ENCODE measurements at regions of chr5 and their contacts with region 1.

Region 1: DNA sequence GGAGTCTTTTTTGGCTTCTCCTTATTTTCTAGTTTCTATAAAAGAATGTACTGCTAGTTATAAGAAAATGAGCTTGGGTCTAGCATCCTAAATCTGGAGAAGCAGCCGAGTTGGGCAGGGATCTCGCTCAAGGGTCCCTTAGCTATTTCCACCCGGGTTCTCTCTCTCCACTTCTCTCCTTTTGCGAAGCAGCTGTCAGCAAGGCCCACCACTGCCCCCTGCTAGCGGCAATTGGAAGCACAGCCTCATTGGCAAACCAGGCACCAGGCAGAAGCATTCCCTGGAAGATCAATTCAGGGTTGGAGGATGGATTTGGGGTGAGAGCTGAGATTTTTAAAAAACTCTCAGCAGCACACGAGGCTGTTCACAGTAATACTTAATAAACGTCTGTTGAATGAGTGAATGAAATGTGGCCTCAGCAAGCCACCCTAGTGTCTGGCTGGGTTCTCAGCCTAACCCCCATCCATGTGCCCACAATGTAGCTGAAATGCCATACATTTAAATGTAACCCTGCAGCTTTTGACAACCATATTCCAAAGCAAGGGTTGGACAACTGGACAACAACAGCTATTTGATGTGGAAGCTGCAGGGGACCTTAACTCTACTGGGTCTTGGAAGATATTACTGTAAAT is 34.6 kb upstream of the TNIP1 start:
- DNase-seq: peak; percentile 78
- H3K4me3 Mint-ChIP-seq: no peak overlapping the region
- H3K27ac Mint-ChIP-seq: no peak overlapping the region
- H3K4me1 Mint-ChIP-seq: no peaks in the 10 kb centered on the region
- H3K27me3 Mint-ChIP-seq: no peaks in the 10 kb centered on the region
- CTCF ChIP-seq: peak; percentile 99

Region 2: DNA sequence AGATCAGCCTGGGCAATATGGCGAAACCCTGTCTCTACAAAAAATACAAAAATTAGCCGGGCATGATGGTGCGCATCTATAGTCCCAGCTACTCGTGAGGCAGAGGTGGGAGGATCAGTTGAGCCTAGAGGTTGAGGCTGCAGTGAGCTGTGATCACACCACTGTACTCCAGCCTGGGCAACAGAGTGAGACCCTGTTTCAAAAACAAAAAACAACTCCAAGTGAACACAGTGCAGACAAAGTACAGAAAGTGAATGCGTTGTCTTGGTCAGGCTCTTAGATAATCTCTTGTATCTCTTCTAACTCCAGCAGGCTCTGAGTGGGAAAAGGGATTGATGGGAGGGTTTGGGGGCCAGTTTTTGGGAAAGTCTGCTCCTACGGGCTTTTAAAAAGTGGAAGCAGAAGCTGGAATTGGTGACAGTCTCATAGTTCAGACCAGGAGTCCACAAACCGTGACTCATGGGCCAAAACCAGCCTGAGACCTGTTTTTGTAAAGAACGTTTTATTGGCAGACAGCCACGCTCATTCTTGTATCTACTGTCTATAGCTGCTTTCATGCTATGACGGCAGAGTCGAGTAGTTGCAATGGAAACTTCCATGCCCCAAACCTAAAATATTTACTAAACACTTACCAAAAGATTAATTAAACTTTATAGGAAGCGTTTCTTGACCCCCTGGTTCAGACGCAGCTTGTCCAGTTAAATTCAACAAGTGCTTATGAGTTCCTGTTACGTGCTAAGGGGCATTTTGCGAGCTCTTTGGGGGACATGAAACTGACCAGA is 574.6 kb before region 1 on chr5:
- CTCF ChIA-PET with region 1: no interaction called
- POLR2A ChIA-PET with region 1: no interaction called
- intact Hi-C with region 1: no loop called
- DNase-seq: peak; percentile 99
- H3K4me3 Mint-ChIP-seq: peak overlapping the region; percentile 43
- H3K27ac Mint-ChIP-seq: peak overlapping the region; percentile 90
- H3K4me1 Mint-ChIP-seq: peaks cover 36% of the 10 kb centered on the region
- H3K27me3 Mint-ChIP-seq: no peaks in the 10 kb centered on the region
- CTCF ChIP-seq: no peak

Region 3: GRCh38 chr5:151002250-151002649 is 113.1 kb before region 1 on chr5:
- CTCF ChIA-PET with region 1: interaction called, 394 read pairs
- POLR2A ChIA-PET with region 1: interaction called, 6 read pairs
- intact Hi-C with region 1: loop called (anchors 1 kb)
- DNase-seq: peak; percentile 77
- H3K4me3 Mint-ChIP-seq: no peak overlapping the region
- H3K27ac Mint-ChIP-seq: no peak overlapping the region
- H3K4me1 Mint-ChIP-seq: no peaks in the 10 kb centered on the region
- H3K27me3 Mint-ChIP-seq: no peaks in the 10 kb centered on the region
- CTCF ChIP-seq: peak; percentile 79

Region 4: DNA sequence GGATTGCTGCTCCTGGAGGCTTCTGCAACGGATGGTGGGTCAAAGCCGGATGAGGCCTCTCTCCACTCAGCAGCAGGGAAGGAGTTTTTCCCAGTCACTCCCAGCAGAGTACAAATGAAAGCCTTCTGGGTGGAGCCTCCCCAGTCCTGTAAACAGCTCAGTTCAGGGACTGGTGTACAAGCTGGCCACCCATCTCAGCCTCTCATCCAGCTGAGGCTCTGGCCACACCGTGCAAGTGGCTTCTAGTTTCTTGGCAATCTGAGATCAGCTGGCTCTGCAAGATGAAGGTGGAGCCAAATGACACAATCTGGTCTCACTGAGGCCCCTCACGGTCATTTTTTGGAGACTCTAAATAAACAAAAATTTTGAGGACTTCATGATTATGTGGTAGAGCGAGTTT is 85.0 kb before region 1 on chr5:
- CTCF ChIA-PET with region 1: interaction called, 35 read pairs
- POLR2A ChIA-PET with region 1: no interaction called
- intact Hi-C with region 1: no loop called
- DNase-seq: no peak
- H3K4me3 Mint-ChIP-seq: no peak overlapping the region
- H3K27ac Mint-ChIP-seq: no peak overlapping the region
- H3K4me1 Mint-ChIP-seq: peaks cover 13% of the 10 kb centered on the region
- H3K27me3 Mint-ChIP-seq: no peaks in the 10 kb centered on the region
- CTCF ChIP-seq: no peak

Region 5: GRCh38 chr5:151080623-151081430 is 34.6 kb before region 1 on chr5 and contains the start of gene TNIP1:
- CTCF ChIA-PET with region 1: interaction called, 1,587 read pairs
- POLR2A ChIA-PET with region 1: interaction called, 19 read pairs
- intact Hi-C with region 1: no loop called
- DNase-seq: peak; percentile 94
- H3K4me3 Mint-ChIP-seq: peak within 1 kb of the TSS; percentile 74
- H3K27ac Mint-ChIP-seq: peak within 1 kb of the TSS; percentile 59
- H3K4me1 Mint-ChIP-seq: peaks cover 78% of the 10 kb centered on the region
- H3K27me3 Mint-ChIP-seq: no peaks in the 10 kb centered on the region
- CTCF ChIP-seq: no peak
- total RNA-seq, gene TNIP1: 246 and 342 TPM in 2 replicates

Region 6: GRCh38 chr5:151134238-151134637 is 18.8 kb after region 1 on chr5:
- CTCF ChIA-PET with region 1: interaction called, 43 read pairs
- POLR2A ChIA-PET with region 1: no interaction called
- intact Hi-C with region 1: no loop called
- DNase-seq: no peak
- H3K4me3 Mint-ChIP-seq: no peak overlapping the region
- H3K27ac Mint-ChIP-seq: no peak overlapping the region
- H3K4me1 Mint-ChIP-seq: no peaks in the 10 kb centered on the region
- H3K27me3 Mint-ChIP-seq: no peaks in the 10 kb centered on the region
- CTCF ChIP-seq: no peak

Region 7: DNA sequence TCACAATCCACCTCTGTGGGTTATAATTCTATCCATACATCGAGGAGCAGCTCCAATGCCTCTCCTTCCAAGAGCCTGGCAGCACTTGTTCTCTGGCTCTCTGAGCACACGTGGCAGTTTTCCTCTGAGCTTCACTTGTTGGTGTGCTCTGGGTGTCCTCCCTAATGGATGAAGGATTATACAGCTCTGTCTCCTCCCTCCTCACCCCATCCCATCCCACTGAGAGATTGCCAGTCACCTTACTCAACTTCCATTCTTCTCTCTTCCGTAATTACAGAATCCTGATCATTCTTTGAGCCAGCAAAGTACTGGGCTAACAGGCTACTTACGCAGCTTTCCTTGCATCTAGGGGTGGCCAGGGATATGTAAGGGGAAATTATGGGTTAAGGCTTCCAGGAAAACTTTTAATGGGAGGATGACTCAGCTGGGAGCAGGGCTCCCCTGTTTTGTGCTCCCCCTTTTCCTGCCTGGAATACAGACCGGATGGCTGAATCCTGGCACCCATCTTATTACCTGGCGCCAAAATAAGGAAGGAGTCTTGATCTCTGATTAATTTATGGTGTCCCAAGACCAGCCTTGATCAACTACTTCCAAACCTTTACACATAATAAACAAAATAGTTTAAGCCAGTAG is 114.8 kb after region 1 on chr5:
- CTCF ChIA-PET with region 1: interaction called, 338 read pairs
- POLR2A ChIA-PET with region 1: no interaction called
- intact Hi-C with region 1: no loop called
- DNase-seq: no peak
- H3K4me3 Mint-ChIP-seq: no peak overlapping the region
- H3K27ac Mint-ChIP-seq: no peak overlapping the region
- H3K4me1 Mint-ChIP-seq: peaks cover 9% of the 10 kb centered on the region
- H3K27me3 Mint-ChIP-seq: no peaks in the 10 kb centered on the region
- CTCF ChIP-seq: no peak